ENCODE measurements at regions of chr6 and their contacts with region 1.

Region 1: DNA sequence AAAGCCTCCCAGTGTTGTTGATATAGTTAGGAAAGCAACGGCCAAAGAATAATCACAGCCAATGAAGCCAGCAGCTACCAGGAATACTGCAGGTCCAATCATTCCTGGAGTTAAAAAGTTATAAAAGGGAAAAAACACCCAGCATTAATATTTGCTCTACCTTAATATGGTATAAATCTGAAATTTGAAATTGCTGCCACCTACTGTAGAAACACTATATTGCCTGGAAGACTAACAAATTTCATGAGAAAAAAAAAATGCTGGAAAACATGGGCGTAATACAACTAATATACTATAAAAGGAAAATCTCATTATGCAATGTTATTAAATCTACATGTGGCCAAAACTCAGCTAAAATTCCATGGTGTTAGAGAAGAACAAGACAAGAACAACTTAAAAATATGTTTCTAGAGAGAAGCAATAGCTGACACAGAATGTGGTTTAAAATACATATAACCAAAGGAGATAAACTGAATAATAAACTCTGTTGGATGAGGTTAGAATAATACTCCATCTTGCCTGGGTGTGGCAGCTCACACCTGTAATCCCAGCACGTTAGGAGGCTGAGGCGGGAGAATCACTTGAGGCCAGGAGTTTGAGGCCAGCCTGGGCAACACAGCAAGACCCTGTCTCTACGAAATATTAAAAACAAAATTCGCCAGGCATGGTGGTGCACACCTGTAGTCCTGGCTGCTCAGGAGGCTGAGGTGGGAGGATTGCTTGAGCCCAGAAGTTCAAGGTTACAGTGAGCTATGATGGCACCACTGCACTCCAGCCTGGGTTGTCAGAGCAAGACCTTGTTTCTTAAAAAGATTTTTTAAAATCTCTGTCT is 43.1 kb downstream of the SLC17A5 start:
- DNase-seq: no peak
- ATAC-seq: peak; percentile 49
- H3K4me3 Mint-ChIP-seq: no peak overlapping the region
- H3K27ac Mint-ChIP-seq: no peak overlapping the region
- H3K4me1 Mint-ChIP-seq: peaks cover 4% of the 10 kb centered on the region
- H3K27me3 Mint-ChIP-seq: no peaks in the 10 kb centered on the region

Region 2: DNA sequence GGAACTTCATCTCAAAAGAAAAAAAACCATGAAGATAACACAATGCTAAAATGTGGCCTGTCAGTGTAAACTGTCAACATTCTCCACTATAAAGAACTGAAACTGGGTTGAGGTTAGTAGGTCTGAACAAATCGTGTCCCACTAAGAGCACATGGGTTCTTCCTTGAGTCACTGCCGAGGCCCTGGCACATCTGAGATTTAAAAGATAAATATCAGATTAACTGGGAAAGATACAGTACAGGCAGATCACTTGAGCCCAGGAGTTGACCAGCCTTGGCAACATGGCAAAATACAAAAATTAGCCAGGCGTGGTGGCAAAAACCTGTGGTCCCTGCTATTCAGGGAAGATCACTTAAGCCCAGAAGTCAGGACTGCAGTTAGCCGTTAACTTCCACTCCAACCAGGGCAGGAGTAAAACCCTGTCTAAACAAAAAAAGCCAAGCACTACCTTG is 95.4 kb before region 1 on chr6:
- CTCF ChIA-PET with region 1: interaction called, 47 read pairs
- DNase-seq: peak; percentile 43
- ATAC-seq: peak; percentile 10
- H3K4me3 Mint-ChIP-seq: no peak overlapping the region
- H3K27ac Mint-ChIP-seq: peak overlapping the region; percentile 81
- H3K4me1 Mint-ChIP-seq: peaks cover 55% of the 10 kb centered on the region
- H3K27me3 Mint-ChIP-seq: no peaks in the 10 kb centered on the region

Region 3: GRCh38 chr6:73520688-73521350 is 89.8 kb before region 1 on chr6 and contains the start of gene EEF1A1:
- CTCF ChIA-PET with region 1: interaction called, 47 read pairs
- DNase-seq: peak; percentile 100
- ATAC-seq: peak; percentile 69
- H3K4me3 Mint-ChIP-seq: peak within 1 kb of the TSS; percentile 96
- H3K27ac Mint-ChIP-seq: peak within 1 kb of the TSS; percentile 99
- H3K4me1 Mint-ChIP-seq: peaks cover 47% of the 10 kb centered on the region
- H3K27me3 Mint-ChIP-seq: no peaks in the 10 kb centered on the region
- total RNA-seq, gene EEF1A1: 5,026 to 6,984 TPM

Region 4: DNA sequence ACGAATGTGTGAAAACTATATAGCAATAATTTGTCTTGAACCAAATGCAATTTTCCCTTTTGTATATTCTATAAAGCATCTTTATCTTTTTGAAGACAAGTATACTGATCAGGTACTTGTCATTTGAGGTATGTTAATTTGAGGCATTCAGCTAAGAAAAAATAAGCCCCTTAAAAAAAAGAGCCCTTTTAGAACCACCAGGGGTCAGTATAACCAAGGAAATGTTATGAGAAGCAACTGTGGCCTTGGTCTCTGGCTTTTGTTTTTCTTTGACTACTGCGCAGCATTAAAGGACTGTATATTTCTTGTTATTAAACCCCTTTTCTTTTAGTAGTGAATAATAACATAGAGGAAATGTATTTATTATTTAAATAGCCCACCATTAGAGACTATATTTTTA is 128.4 kb after region 1 on chr6:
- CTCF ChIA-PET with region 1: no interaction called
- DNase-seq: no peak
- ATAC-seq: peak; percentile 58
- H3K4me3 Mint-ChIP-seq: no peak overlapping the region
- H3K27ac Mint-ChIP-seq: no peak overlapping the region
- H3K4me1 Mint-ChIP-seq: no peaks in the 10 kb centered on the region
- H3K27me3 Mint-ChIP-seq: no peaks in the 10 kb centered on the region

Measured in activated CD8-positive, alpha-beta memory T cell treated with anti-CD3 and anti-CD28 coated beads, Interleukin-2, amount 10 ng/mL, durations not matched to agents 7 days and 5 days (primary cell).